HepG2 (cell line): ENCODE measurements at regions of chr2 and their contacts with region 1.

Region 1: GRCh38 chr2:234846599-234847363 is 105.0 kb upstream of the SH3BP4 start:
- DNase-seq: no peak
- ATAC-seq: peak; percentile 14; the same call in 2 of the 3 replicates
- H3K4me3 ChIP-seq: no peak overlapping the region
- H3K27ac ChIP-seq: peak overlapping the region; percentile 77
- H3K4me1 ChIP-seq: peaks cover 96% of the 10 kb centered on the region
- H3K27me3 ChIP-seq: no peaks in the 10 kb centered on the region
- CTCF ChIP-seq: no peak
- EP300 ChIP-seq: no peak
- POLR2A ChIP-seq: no peak
- RAD21 ChIP-seq: no peak

Region 2: DNA sequence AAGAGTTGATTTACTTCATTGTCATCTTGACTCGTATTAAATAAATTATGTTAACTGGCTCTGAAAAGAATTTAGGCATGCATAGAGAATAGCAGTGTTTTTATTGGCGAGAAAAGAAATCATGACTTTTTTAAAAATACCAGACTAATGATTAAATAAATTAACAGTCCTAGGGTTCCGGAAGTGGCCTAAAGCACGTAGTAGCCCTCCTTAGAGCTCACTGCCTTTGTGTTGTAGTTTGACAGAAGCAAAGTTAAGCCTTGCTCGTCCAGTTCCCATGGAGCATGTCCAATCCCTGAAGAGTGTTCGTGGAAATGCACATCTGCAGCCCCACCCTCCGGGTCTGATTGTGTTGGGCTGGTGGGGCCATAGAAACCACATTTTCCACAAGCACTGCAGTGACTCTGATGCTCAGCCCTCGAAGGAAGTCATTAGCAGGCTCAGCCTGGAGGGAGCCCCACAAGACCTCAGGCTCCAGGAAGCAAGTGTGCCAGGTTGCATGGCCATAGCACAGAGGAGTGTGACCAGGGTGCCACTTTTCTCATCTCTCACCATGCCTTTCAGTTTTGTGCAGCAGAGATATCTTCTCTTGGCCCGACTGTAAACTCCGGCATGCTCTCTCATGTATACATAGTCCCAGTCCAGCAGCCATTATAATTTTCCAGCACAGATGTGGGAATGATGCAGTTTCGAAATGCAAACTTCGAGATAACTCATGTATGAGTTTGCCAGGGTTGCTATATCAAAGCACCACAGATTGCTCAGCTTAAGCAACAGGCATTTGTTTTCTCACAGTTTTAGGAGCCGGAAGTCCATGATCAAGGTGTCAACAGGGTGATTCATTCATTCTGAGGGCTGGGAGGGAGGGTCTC is 83.5 kb before region 1 on chr2:
- CTCF ChIA-PET with region 1: no interaction called
- POLR2A ChIA-PET with region 1: no interaction called
- in situ Hi-C with region 1: no loop called
- intact Hi-C with region 1: no loop called
- DNase-seq: peak; percentile 86
- ATAC-seq: peak; percentile 91
- H3K4me3 ChIP-seq: no peak overlapping the region; a peak in 1 of 6 replicates
- H3K27ac ChIP-seq: no peak overlapping the region
- H3K4me1 ChIP-seq: peaks cover 49% of the 10 kb centered on the region
- H3K27me3 ChIP-seq: no peaks in the 10 kb centered on the region
- CTCF ChIP-seq: no peak
- EP300 ChIP-seq: peak in 1 of 2 experiments; percentile 88; a peak in 2 of 4 replicates
- POLR2A ChIP-seq: no peak
- RAD21 ChIP-seq: no peak

Region 3: DNA sequence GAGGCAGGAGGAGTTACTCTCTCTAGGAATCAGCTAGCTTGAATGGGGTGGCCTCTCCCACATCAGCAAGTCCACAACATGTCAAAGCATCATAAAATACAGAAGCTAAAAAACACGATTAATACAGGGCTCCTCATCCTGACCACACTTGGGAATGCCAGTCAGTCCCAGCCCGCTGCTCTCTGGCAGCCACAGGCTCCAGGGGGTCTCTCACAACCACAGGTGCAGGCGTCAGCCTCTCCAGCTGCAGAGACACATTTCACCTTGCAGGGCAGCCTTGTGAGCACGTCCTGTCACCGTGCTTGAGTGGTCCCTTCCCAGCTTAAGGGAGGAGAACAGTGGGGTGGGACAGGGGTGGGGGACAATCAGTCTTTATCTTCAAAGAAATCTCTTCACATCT is 32.4 kb before region 1 on chr2:
- CTCF ChIA-PET with region 1: no interaction called
- POLR2A ChIA-PET with region 1: no interaction called
- in situ Hi-C with region 1: no loop called
- intact Hi-C with region 1: no loop called
- DNase-seq: no peak
- ATAC-seq: no peak
- H3K4me3 ChIP-seq: no peak overlapping the region
- H3K27ac ChIP-seq: no peak overlapping the region
- H3K4me1 ChIP-seq: peaks cover 11% of the 10 kb centered on the region
- H3K27me3 ChIP-seq: peaks cover 4 to 7% of the 10 kb centered on the region in 2 experiments; a peak in 3 of 5 replicates
- CTCF ChIP-seq: no peak
- EP300 ChIP-seq: no peak
- POLR2A ChIP-seq: no peak
- RAD21 ChIP-seq: no peak

Region 4: GRCh38 chr2:234858128-234858527 is 11.3 kb after region 1 on chr2:
- CTCF ChIA-PET with region 1: no interaction called
- POLR2A ChIA-PET with region 1: interaction called, 15 read pairs
- in situ Hi-C with region 1: no loop called
- intact Hi-C with region 1: loop called (anchors 2 kb)
- DNase-seq: no peak
- ATAC-seq: no peak
- H3K4me3 ChIP-seq: no peak overlapping the region
- H3K27ac ChIP-seq: no peak overlapping the region
- H3K4me1 ChIP-seq: peaks cover 84% of the 10 kb centered on the region
- H3K27me3 ChIP-seq: no peaks in the 10 kb centered on the region
- CTCF ChIP-seq: no peak
- EP300 ChIP-seq: no peak
- POLR2A ChIP-seq: no peak
- RAD21 ChIP-seq: no peak

Region 5: DNA sequence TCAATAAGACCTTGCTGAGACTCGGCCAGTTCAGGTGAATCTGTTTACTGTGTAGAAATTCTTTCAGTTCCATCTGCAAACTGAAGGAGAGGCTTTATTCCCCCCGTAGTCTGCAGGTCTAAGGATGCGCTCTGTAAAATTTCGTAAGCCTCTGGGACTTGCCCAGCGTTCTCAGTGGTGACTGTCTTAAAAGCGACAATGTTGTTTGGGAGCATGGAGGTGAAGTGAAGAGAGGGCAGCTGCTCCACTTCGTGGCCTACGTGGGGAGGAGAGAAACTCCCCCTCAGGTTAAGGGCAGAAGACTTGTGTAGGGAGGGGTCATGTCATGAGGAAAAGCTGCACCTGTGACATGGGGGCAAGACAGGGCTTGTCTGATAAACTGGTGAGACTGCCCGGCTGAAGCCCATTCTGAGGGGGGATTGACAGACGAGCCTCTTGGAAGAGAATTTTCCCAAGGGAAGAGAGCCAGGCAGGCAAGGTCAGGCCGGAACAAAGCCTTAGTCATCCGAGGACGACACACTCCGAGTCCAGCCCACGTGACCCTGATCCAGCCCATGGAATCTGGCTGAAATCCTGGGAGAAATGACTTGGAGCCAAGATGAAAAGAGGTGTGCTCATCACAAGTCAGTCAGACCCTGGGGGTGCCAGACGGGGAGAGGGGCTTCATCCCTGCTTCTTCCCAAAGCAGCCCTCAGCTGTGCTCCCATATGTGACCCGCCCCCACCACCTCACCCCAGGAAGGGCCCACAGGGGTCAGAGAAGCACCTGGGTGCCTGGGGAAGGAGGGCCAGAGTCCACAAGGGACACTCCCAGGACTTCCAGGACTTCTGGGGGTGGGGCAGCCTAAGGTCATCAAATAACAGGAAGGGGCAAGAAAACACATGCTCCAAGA is 16.5 kb after region 1 on chr2:
- CTCF ChIA-PET with region 1: no interaction called
- POLR2A ChIA-PET with region 1: interaction called, 15 read pairs
- in situ Hi-C with region 1: no loop called
- intact Hi-C with region 1: loop called (anchors 2 kb)
- DNase-seq: peak; percentile 88
- ATAC-seq: peak; percentile 79
- H3K4me3 ChIP-seq: no peak overlapping the region
- H3K27ac ChIP-seq: peak overlapping the region; percentile 88
- H3K4me1 ChIP-seq: peaks cover 96% of the 10 kb centered on the region
- H3K27me3 ChIP-seq: no peaks in the 10 kb centered on the region
- CTCF ChIP-seq: 0 out of 2 replicates have a peak, but pooled peaks have one; percentile 3
- EP300 ChIP-seq: peak in 1 of 2 experiments; percentile 53; a peak in 1 of 4 replicates
- POLR2A ChIP-seq: 0 out of 4 replicates have a peak, but pooled peaks of 1 of the 2 experiments have one; percentile 23
- RAD21 ChIP-seq: no peak; the same call in 1 of the 2 replicates